OCI-LY7 (cell line): ENCODE measurements at regions of chr2 and their contacts with region 1.

Region 1: DNA sequence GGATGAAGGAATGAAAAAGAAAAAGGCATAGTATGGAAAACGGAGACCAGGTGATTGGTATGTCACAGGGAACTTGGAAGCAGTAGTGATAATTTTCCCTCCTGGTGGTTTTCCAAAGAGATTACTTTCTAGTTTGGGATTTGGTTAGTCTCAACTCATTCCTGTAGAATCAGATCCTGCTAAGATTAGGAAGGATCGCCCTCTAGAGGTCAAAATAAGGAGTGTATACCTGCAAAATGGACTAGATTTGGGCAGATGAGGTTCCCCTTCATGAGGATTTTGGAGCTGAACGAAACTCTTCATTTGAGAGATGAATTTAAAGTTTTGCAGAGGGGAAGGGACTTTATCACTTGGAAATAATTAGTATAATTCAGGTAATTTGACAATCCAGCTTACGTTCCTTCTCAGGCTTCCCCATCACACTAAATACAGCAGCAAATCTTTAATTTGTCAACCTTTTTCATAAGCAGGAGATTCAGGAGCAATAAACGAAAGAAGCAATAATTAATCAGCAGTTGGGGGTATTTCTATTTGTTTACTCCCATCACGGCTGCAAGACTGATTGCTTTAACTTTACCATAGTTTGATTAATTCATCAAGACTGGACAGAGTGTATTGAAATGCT is 65.2 kb downstream of the CCDC195 start:
- DNase-seq: peak; percentile 85
- H3K4me3 ChIP-seq: peak overlapping the region; percentile 38
- H3K27ac ChIP-seq: peak overlapping the region; percentile 34
- H3K4me1 ChIP-seq: peaks cover 35% of the 10 kb centered on the region
- CTCF ChIP-seq: peak; percentile 98

Region 2: GRCh38 chr2:223970343-223971128 is 680.4 kb before region 1 on chr2:
- CTCF ChIA-PET with region 1: no interaction called
- POLR2A ChIA-PET with region 1: interaction called, 3 read pairs
- intact Hi-C with region 1: loop called (anchors 5 kb)
- DNase-seq: peak; percentile 69
- H3K4me3 ChIP-seq: no peak overlapping the region
- H3K27ac ChIP-seq: no peak overlapping the region
- H3K4me1 ChIP-seq: no peaks in the 10 kb centered on the region
- CTCF ChIP-seq: peak; percentile 99

Region 3: DNA sequence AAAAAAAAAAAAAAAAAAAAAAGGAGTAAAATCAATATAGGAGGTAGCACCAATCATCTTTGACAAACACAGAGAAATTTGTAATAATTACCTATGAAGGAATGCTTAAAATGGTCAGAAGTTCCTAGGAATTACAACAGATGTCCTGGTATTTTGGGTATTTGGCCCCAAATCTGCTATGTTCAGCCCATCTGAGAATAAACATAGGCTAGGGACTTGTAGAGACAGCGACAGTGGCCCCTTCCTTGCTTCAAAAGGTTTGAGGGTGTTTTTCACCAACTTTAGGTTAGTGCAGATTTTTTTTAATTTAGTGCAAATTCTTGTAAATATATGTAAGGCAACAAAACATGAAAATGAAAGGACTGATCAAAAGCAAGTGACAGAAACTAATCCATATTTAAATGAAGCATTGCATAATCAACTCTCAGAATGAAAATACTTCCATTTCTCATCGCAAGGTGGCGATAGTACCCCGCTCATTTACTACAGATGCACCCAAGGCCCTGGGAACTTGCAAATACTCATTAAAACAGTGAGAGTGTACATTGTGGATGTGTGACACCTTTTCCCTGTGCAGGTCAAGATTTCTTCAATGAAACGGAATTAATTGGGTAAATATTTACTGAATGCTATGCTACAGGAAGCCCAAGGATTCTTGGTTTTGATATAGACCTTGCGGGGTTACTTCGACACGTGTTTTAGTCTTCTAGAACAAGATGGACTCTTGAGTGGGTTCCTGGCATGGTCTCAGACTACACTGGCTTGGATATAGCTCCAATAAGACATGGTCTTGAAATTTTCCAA is 293.6 kb before region 1 on chr2:
- CTCF ChIA-PET with region 1: interaction called, 3 read pairs
- POLR2A ChIA-PET with region 1: interaction called, 5 read pairs
- intact Hi-C with region 1: loop called (anchors 1 kb)
- DNase-seq: peak; percentile 75
- H3K4me3 ChIP-seq: no peak overlapping the region
- H3K27ac ChIP-seq: no peak overlapping the region
- H3K4me1 ChIP-seq: peaks cover 8% of the 10 kb centered on the region
- CTCF ChIP-seq: peak; percentile 93

Region 4: DNA sequence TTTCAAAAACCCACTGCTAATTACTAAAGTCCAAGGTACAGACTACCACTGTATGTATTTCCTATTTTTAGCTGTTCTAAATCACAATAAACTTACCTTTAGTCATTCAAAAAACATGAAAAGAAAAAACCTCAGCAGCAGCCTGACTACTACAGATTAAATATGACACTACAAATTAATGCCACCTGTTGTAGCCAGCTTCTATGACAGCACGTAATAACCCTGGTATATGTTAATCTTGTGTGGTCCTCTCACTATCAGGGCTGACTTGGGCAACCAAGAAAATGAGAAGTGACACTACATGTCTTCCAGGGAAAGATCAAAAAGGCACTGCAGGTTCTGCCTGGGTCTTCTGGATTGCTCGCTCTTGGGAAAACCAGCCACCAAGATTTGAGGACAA is 158.4 kb before region 1 on chr2:
- CTCF ChIA-PET with region 1: no interaction called
- POLR2A ChIA-PET with region 1: no interaction called
- intact Hi-C with region 1: loop called (anchors 5 kb)
- DNase-seq: peak; percentile 45
- H3K4me3 ChIP-seq: peak overlapping the region; percentile 8
- H3K27ac ChIP-seq: peak overlapping the region; percentile 100
- H3K4me1 ChIP-seq: peaks cover 58% of the 10 kb centered on the region
- CTCF ChIP-seq: no peak

Region 5: GRCh38 chr2:224611938-224612337 is 39.0 kb before region 1 on chr2:
- CTCF ChIA-PET with region 1: interaction called, 4 read pairs
- POLR2A ChIA-PET with region 1: interaction called, 12 read pairs
- intact Hi-C with region 1: loop called (anchors 1 kb)
- DNase-seq: peak; percentile 80
- H3K4me3 ChIP-seq: no peak overlapping the region
- H3K27ac ChIP-seq: no peak overlapping the region
- H3K4me1 ChIP-seq: peaks cover 10% of the 10 kb centered on the region
- CTCF ChIP-seq: peak; percentile 93

Region 6: DNA sequence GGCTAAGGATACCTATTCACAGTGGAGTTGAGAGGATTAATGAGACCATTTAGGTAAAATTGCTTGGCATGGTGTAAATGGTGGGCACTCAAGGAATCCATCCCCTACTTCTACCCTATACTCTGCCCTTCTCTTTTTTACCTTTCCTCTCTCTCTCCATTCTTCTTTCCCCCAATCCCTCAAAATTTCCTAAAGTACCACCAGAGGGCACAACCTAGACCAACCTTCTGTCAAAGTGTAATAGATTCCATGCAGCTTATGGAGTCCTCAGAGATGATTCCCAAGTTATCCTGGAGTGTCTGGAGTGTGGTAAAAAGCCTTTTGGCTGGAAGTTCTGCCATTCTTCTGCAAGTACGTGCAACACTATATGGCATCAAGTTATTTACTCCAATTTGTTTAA is 98.2 kb after region 1 on chr2:
- CTCF ChIA-PET with region 1: interaction called, 3 read pairs
- POLR2A ChIA-PET with region 1: no interaction called
- intact Hi-C with region 1: loop called (anchors 5 kb)
- DNase-seq: no peak
- H3K4me3 ChIP-seq: no peak overlapping the region
- H3K27ac ChIP-seq: no peak overlapping the region
- H3K4me1 ChIP-seq: peaks cover 60% of the 10 kb centered on the region
- CTCF ChIP-seq: peak; percentile 56

Region 7: DNA sequence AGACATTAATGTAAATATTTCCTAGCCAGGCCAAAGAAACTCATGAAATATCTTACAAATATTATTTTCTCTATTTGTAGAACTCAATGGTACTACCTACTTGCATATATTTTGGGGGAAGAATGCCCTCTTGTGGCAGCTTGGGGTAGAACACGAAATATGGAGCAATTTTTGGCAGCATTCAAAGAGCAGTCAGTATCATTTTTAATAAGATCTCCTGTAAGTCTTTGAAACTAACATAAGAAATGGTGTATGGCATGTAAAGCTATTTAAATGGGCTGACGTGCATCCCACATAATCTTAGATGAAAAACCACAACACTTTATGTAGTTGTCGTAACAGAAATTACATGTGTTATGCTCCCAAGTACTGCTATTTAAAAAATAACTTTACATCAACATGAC is 127.5 kb after region 1 on chr2:
- CTCF ChIA-PET with region 1: interaction called, 7 read pairs
- POLR2A ChIA-PET with region 1: interaction called, 19 read pairs
- intact Hi-C with region 1: loop called (anchors 1 kb)
- DNase-seq: peak; percentile 73
- H3K4me3 ChIP-seq: no peak overlapping the region
- H3K27ac ChIP-seq: peak overlapping the region; percentile 0
- H3K4me1 ChIP-seq: peaks cover 31% of the 10 kb centered on the region
- CTCF ChIP-seq: peak; percentile 99

Region 8: DNA sequence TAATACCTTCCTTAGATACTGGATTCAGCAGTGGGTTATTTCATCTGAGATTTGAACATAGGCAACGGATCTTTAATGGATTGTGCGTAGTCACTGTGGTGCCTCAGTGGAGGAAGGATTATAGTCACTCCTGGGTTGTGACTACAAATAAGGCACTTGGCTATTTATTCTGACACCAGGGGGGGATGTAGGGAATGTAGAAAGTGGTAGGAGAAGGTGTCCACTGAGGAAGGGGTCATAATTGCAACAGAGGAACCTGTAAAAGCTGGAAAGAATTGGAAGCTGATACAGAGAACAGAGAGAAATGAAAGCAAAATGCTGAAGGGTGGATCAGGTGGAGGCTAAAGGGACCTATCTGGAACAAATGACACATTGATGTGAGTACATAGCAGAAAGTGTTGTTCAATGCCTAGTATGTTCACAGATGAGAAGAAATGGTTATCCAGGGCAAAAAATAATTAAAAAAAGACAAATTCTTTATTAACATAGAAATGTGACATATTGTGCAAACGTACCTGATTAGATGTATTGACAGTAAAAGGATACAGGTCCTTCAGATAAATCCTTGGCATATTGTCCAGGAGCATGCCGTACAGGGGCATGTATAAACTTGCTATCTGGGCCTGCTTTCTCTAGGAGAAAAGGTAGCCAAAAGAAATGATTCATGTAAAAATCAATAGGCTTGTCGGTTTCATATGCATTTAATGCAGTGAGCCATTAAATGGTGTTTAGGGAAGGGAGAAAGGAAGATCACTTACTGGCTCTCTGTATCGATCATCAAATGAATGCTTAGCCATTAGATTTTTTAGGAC is 156.4 kb after region 1 on chr2:
- CTCF ChIA-PET with region 1: no interaction called
- POLR2A ChIA-PET with region 1: no interaction called
- intact Hi-C with region 1: no loop called
- DNase-seq: no peak
- H3K4me3 ChIP-seq: no peak overlapping the region
- H3K27ac ChIP-seq: no peak overlapping the region
- H3K4me1 ChIP-seq: no peaks in the 10 kb centered on the region
- CTCF ChIP-seq: peak; percentile 27; the same call in 1 of the 2 replicates